PC-3 (cell line): ENCODE measurements at regions of chr2 and their contacts with region 1.

Region 1: GRCh38 chr2:123993728-123994323 is 31.3 kb upstream of the CNTNAP5 start:
- DNase-seq: peak; percentile 70
- ATAC-seq: peak; percentile 84
- H3K4me3 ChIP-seq: no peak overlapping the region
- H3K27ac ChIP-seq: no peak overlapping the region
- H3K4me1 ChIP-seq: no peaks in the 10 kb centered on the region
- H3K27me3 ChIP-seq: no peaks in the 10 kb centered on the region
- CTCF ChIP-seq: peak; percentile 73

Region 2: GRCh38 chr2:123791684-123792083 is 202.1 kb before region 1 on chr2:
- CTCF ChIA-PET with region 1: no interaction called
- POLR2A ChIA-PET with region 1: no interaction called
- intact Hi-C with region 1: loop called (anchors 10 kb)
- DNase-seq: no peak
- ATAC-seq: no peak
- H3K4me3 ChIP-seq: no peak overlapping the region
- H3K27ac ChIP-seq: no peak overlapping the region
- H3K4me1 ChIP-seq: no peaks in the 10 kb centered on the region
- H3K27me3 ChIP-seq: no peaks in the 10 kb centered on the region
- CTCF ChIP-seq: no peak

Region 3: GRCh38 chr2:124027182-124027581 is 33.4 kb after region 1 on chr2:
- CTCF ChIA-PET with region 1: no interaction called
- POLR2A ChIA-PET with region 1: no interaction called
- intact Hi-C with region 1: no loop called
- DNase-seq: peak; percentile 75
- ATAC-seq: peak; percentile 92
- H3K4me3 ChIP-seq: no peak overlapping the region
- H3K27ac ChIP-seq: no peak overlapping the region
- H3K4me1 ChIP-seq: no peaks in the 10 kb centered on the region
- H3K27me3 ChIP-seq: peaks cover 6% of the 10 kb centered on the region
- CTCF ChIP-seq: peak; percentile 89